Left ventricle myocardium inferior (tissue), 1 donor: ENCODE measurements at regions of chr4 and their contacts with region 1.

Region 1: GRCh38 chr4:87006676-87007527 is 72.1 kb downstream of the AFF1 start:
- DNase-seq: peak; percentile 93
- H3K4me3 ChIP-seq: peak overlapping the region; percentile 85
- H3K27ac ChIP-seq: peak overlapping the region; percentile 99
- H3K4me1 ChIP-seq: peaks cover 67% of the 10 kb centered on the region
- H3K27me3 ChIP-seq: no peaks in the 10 kb centered on the region
- CTCF ChIP-seq: peak; percentile 12

Region 2: GRCh38 chr4:86895692-86896488 is 111.0 kb before region 1 on chr4:
- intact Hi-C with region 1: no loop called
- DNase-seq: no peak
- H3K4me3 ChIP-seq: no peak overlapping the region
- H3K27ac ChIP-seq: no peak overlapping the region
- H3K4me1 ChIP-seq: peaks cover 18% of the 10 kb centered on the region
- H3K27me3 ChIP-seq: no peaks in the 10 kb centered on the region
- CTCF ChIP-seq: peak; percentile 87

Region 3: DNA sequence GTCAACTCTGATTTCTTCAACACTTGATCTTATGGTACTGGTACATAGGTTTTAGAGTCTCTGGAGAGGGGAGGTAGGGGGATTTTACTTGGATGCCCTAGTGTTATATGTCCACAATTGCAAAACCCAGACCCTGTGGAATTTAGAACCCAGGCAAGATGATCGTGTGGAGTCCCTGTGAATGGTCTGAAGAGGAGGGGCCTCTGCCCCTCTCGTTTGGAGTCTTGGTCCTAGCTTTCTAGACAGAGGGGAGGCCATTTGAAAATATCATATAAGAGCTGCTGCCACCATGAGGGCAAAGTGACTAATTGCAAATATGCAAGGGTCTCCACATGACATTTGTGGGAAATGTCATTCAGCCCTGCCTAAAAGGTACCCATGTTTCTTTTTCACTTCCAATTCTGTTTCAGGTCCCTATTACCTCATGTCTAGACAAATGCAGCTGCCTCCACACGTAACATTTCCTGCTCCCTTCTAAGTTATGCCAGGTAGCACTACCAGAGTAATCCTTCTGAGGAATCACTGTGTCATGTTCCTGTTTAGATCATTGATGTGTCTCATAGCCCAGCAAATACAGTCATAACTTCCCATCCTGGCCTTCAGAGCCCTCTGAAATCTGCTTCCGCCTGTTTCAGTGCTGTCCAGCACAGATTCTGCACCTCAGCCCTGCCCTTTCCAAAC is 86.7 kb after region 1 on chr4:
- intact Hi-C with region 1: loop called (anchors 10 kb)
- DNase-seq: no peak
- H3K4me3 ChIP-seq: no peak overlapping the region
- H3K27ac ChIP-seq: peak overlapping the region; percentile 55
- H3K4me1 ChIP-seq: peaks cover 63% of the 10 kb centered on the region
- H3K27me3 ChIP-seq: no peaks in the 10 kb centered on the region
- CTCF ChIP-seq: peak; percentile 74